Aorta (tissue), 5 donors: ENCODE measurements at regions of chr14 and their contacts with region 1.

Region 1: DNA sequence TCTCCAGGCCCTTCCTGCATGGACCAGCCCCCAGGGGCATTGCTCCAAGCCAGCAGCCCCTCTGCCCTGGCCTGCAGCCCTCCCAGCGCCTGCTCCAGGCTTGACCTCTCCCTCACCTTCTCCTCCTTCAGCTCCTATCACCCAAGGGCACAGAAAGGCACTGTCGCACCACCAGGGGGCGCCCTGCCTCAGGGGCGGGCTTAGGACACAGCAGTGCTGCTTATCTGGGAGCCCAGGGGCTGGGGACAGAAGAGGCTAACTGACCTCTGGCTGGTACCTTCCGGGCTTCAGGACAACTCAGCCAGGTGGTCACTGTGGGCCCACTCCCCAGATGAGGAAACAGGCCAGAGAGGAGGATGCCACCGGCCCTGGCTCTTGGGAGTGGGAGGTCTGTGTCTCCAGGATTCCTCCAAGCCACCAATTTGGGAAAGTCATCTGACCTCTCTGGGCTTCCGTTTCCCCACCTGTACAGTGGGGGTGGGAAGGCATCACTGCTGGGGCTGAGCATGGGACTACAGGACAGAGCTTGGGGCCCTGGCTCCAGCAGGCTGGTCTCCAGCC is 25.3 kb upstream of the GPR132 start:
- DNase-seq: peak; percentile 88 to 95
- ATAC-seq: peak; percentile 61
- H3K4me3 ChIP-seq: no peak overlapping the region
- H3K27ac ChIP-seq: peak overlapping the region in 1 of 2 donors; percentile 73
- H3K4me1 ChIP-seq: no peaks in the 10 kb centered on the region
- H3K27me3 ChIP-seq: no peaks in the 10 kb centered on the region

Region 2: DNA sequence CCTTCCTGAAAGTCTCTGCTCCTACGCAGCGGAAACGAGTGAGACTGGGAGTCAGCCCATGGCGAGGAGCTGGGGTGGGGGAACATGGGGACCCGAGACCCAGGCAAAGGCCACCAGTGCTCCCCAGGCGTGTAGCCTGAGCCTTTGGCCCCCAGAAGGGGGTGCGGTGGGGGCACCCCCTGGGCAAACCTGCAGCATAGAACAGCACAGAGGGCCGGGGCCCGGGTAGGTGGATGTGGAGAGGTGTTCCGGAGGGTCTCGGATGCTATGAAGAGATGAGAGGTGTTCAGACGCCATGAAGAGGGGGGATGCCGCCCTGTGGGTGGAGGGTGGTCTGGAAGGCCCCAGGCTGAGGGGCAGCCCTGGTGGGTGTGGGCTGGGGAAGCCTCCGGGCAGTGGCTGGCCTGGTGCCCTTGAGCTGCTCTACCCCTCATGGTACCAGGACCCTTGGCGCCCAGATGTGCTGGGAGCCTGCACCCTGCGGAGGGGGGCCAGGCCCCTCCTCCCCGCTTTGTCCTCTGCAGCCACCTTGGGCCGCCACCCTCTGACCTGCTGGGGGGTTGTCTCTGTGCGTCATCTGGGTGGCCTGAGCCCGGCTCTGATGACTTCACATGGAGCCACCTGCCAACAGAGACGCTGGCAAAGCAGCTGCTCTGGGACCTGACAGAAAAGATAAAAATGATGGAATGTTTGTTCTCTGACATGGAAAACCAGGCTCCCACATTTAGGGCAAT is 868.8 kb before region 1 on chr14:
- intact Hi-C with region 1: no loop called
- DNase-seq: peak in 1 of 2 donors; percentile 59
- ATAC-seq: no peak
- H3K4me3 ChIP-seq: no peak overlapping the region
- H3K27ac ChIP-seq: no peak overlapping the region
- H3K4me1 ChIP-seq: no peaks in the 10 kb centered on the region
- H3K27me3 ChIP-seq: no peaks in the 10 kb centered on the region

Region 3: DNA sequence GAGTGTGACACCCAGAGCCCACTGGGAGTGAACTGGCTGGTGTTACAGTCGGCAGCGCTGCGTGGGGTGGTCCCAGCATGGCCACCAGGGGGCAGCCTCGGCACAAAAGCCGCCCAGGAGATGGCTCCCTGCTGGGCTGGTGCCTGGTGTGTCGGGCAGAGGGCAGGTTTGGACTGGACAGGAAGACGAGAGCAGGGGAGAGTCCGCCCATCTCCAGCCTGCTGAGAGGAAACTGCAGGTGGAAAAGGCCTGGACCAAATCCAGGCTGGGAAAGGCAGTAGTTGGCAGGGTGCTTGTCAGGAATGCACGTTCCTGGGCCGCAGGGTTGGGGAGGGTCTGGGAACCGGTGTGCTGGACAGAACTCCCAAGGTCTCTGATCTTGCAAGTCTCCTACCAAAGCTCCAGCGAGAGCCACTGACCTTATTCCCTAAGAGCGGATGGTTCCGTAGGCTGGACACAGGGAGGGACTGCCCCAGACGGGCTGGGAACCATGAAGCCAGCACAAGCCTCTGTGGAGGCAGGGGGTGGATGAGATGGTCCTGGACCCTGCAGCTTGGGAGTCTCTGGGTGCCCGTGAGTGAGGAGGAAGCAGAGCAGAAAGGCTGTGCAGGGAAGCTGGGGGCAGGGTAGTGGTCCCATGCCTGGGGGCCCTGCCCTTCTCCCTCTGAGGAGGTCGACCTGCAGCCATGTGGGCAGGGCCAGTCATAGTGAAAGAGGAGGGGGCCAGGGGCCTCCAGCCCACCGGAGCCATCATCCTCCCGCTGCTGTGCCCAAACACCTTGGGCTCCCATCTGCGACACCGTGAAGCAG is 114.2 kb before region 1 on chr14:
- intact Hi-C with region 1: loop called in 1 of 2 experiments (anchors 5 kb)
- DNase-seq: peak; percentile 91 to 94
- ATAC-seq: no peak
- H3K4me3 ChIP-seq: no peak overlapping the region
- H3K27ac ChIP-seq: no peak overlapping the region
- H3K4me1 ChIP-seq: no peaks in the 10 kb centered on the region
- H3K27me3 ChIP-seq: no peaks in the 10 kb centered on the region

Region 4: DNA sequence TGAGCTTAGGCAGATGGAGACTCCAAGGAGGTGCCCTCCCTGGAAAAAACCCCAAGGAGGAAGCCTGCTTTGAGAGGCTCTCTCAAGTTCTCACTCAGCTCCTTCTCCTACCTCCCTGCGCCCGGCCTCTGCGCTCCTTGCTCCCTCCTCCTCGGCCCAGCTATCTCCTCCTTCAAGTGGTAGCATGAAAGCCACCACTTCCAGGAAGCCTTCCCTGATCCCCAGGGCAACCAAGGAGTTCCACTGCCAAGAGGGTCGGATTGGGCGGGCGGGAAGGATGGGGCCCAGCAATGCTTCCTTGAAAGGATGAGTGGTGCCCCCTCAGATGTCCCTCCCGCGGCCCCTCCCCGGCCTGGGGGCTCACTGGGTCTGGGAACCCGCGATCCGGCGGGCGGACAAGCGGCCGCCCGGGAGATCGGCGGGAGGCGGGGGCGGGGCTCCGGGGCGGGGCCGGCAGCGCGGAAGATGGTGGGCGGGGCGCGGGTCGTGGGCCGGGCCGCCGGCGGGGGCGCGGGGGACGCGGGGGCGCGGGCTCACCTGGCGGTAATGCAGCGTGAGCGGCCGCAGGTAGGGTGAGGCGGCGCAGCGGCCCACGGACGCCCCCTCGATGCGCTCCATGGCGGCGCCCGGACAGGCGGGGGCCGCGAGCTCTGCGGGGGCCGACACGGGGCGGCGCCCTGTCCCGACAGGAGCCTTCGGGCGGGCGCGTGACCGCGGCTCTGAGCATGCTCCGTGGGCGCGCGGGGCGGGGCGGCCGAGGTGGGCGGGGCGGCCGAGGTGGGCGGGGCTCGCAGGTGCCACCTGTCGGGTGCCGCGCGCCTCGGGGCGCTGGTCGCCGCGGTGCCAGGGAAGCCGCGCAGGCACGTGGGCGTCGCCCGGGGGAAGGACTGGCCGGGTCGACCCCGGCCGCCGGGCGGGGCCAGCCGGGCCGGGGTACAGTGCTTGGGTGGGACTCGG is 90.3 kb after region 1 on chr14 and contains the start of gene NUDT14:
- intact Hi-C with region 1: loop called in 1 of 2 experiments (anchors 5 kb)
- DNase-seq: peak; percentile 80 to 87
- ATAC-seq: no peak
- H3K4me3 ChIP-seq: peak within 1 kb of the TSS; percentile 30 to 49
- H3K27ac ChIP-seq: no peak within 1 kb of the TSS
- H3K4me1 ChIP-seq: no peaks in the 10 kb centered on the region
- H3K27me3 ChIP-seq: no peaks in the 10 kb centered on the region
- total RNA-seq, gene NUDT14: 13.3 to 29.9 TPM

Region 5: DNA sequence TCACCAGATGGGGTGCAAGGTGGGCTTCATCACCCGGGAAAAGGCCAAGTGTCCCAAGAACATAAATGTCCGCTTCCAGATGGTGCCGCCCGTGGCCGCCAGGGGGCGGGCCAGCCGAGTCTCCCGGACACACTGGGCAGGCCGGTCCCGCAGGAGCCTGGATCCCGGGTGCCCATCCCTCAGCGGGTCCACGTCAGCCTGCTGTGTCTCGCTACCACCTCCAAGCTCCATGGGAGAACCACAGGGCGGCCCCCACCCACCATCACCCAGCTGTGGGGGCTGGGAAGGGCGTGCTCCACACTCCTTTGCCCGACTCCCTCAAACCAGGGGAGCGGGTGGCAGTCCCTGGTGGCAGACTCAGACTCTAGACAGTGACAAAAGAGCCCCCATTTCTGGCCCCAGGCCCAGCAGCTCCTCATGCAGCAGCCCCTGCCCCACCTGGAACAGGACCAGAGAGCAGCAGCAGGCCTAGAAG is 112.5 kb after region 1 on chr14:
- intact Hi-C with region 1: loop called in 1 of 2 experiments (anchors 5 kb)
- DNase-seq: peak; percentile 82 to 94
- ATAC-seq: peak; percentile 69
- H3K4me3 ChIP-seq: no peak overlapping the region
- H3K27ac ChIP-seq: no peak overlapping the region
- H3K4me1 ChIP-seq: no peaks in the 10 kb centered on the region
- H3K27me3 ChIP-seq: no peaks in the 10 kb centered on the region

Region 6: DNA sequence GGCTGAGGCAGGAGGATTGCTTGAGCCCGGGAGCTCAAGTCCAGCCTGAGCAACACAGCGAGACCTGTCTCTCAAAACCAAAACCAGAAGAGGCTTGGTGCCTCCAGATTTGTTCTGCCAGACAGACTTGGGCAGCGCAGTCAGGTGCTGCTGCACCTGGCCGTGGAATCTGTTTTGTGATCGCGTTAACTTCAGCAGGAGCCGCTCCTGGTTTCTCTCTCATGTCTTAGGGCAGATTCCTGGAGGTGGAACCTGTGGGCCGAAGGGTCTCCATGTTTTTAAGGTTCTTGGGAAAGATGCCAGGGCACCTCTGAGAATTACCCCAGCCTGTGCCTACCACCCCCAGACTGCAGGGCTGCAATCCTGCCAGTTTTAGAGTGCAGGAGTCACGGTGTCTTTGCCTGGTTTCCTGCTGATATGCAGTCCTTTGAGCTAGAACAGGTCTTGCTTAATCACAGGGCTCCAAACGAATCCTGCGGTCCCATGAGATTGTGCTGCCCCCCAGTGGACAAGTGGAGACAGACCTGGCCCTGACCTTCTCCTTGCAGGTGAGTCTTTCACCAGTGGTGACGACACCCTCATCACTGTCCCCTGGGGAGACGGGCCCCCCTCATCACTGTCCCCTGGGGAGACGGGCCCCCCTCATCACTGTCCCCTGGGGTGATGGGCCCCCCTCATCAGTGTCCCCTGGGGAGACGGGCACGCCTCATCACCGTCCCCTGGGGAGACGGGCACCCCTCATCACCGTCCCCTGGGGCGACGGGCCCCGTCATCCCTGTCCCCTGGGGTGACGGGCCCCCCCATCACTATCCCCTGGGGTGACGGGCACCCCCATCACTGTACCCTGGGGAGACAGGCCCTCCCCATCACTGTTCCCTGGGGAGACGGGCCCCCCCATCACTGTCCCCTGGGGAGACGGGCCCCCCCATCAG is 261.6 kb after region 1 on chr14:
- intact Hi-C with region 1: loop called (anchors 2 to 5 kb)
- DNase-seq: peak; percentile 84 to 92
- ATAC-seq: peak; percentile 82
- H3K4me3 ChIP-seq: no peak overlapping the region
- H3K27ac ChIP-seq: no peak overlapping the region
- H3K4me1 ChIP-seq: no peaks in the 10 kb centered on the region
- H3K27me3 ChIP-seq: no peaks in the 10 kb centered on the region

Region 7: DNA sequence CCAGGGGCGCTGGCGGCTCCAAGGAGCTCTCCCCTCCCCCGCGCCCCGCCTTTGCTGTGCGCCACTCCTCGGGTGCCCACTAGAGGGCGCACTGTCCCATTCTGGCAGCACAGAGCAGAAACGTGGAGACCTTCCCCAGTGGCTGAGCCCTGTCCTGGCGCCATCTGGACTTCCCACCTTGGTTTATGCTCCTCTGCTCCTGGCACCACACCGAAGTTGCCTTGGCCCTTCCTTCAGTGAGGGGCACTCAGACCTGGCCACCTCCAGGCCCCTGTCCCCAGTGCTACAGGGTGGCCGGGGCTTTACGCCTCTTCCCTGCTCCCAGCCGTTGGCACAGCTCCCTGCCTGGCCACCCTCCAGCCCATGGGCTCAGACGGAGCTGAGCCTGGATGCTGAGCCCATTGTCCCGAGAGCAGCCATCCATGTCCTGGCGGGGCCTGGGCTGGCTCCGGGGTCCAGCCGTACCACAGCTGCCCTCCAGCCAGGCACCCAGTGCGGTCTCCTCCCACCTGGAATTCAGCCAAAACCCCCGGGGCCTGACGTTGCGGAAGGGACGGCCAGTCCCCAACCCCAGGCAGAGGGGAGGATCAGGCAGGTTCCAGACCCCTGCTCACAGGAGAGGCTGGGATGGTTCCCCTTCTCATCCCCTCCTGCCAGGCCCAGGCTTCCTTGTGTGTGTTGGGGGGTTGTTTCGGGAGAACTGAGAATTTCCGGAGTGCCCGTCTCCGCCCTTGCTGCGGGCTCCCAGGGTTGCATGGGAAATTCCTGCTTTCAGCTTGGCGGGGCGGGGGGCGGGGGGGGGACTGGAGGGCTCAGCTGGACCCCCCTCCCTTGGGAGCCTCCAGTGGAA is 390.6 kb after region 1 on chr14:
- intact Hi-C with region 1: loop called in 1 of 2 experiments (anchors 10 kb)
- DNase-seq: peak; percentile 93 to 97
- ATAC-seq: peak; percentile 82
- H3K4me3 ChIP-seq: peak overlapping the region; percentile 4 to 6
- H3K27ac ChIP-seq: peak overlapping the region; percentile 85 to 86
- H3K4me1 ChIP-seq: peaks cover 0 to 2% of the 10 kb centered on the region in 2 donors
- H3K27me3 ChIP-seq: no peaks in the 10 kb centered on the region